ENCODE measurements at regions of chr12 and their contacts with region 1.

Region 1: GRCh38 chr12:11765817-11766794 is 116.6 kb downstream of the ETV6 start:
- DNase-seq: peak; percentile 86
- ATAC-seq: peak; percentile 78
- H3K4me3 ChIP-seq: peak overlapping the region in 3 of 5 experiments; percentile 1 to 21 (median 16)
- H3K4me3 Mint-ChIP-seq: peak overlapping the region; percentile 84
- H3K27ac ChIP-seq: peak overlapping the region; percentile 68 to 74
- H3K27ac Mint-ChIP-seq: peak overlapping the region; percentile 91
- H3K4me1 ChIP-seq: peaks cover 63 to 70% of the 10 kb centered on the region in 2 donors
- H3K4me1 Mint-ChIP-seq: peaks cover 83% of the 10 kb centered on the region
- H3K27me3 ChIP-seq: no peaks in the 10 kb centered on the region
- H3K27me3 Mint-ChIP-seq: no peaks in the 10 kb centered on the region
- CTCF ChIP-seq: no peak

Region 2: GRCh38 chr12:11730299-11731041 is 35.6 kb before region 1 on chr12:
- CTCF ChIA-PET with region 1: interaction called, 6 read pairs
- POLR2A ChIA-PET with region 1: interaction called, 9 read pairs
- intact Hi-C with region 1: loop called (anchors 1 kb)
- DNase-seq: peak; percentile 83
- ATAC-seq: peak; percentile 80
- H3K4me3 ChIP-seq: no peak overlapping the region
- H3K4me3 Mint-ChIP-seq: peak overlapping the region; percentile 79
- H3K27ac ChIP-seq: peak overlapping the region; percentile 69 to 76
- H3K27ac Mint-ChIP-seq: peak overlapping the region; percentile 94
- H3K4me1 ChIP-seq: peaks cover 82 to 94% of the 10 kb centered on the region in 2 donors
- H3K4me1 Mint-ChIP-seq: peaks cover 92% of the 10 kb centered on the region
- H3K27me3 ChIP-seq: no peaks in the 10 kb centered on the region
- H3K27me3 Mint-ChIP-seq: no peaks in the 10 kb centered on the region
- CTCF ChIP-seq: no peak

Region 3: GRCh38 chr12:11746024-11746771 is 19.9 kb before region 1 on chr12:
- CTCF ChIA-PET with region 1: interaction called, 18 read pairs
- POLR2A ChIA-PET with region 1: interaction called, 12 read pairs
- intact Hi-C with region 1: loop called (anchors 2 kb)
- DNase-seq: peak; percentile 84
- ATAC-seq: peak; percentile 67
- H3K4me3 ChIP-seq: peak overlapping the region in 2 of 5 experiments; percentile 3 to 13
- H3K4me3 Mint-ChIP-seq: peak overlapping the region; percentile 68
- H3K27ac ChIP-seq: peak overlapping the region; percentile 19 to 71
- H3K27ac Mint-ChIP-seq: peak overlapping the region; percentile 89
- H3K4me1 ChIP-seq: peaks cover 65 to 80% of the 10 kb centered on the region in 2 donors
- H3K4me1 Mint-ChIP-seq: peaks cover 83% of the 10 kb centered on the region
- H3K27me3 ChIP-seq: no peaks in the 10 kb centered on the region
- H3K27me3 Mint-ChIP-seq: no peaks in the 10 kb centered on the region
- CTCF ChIP-seq: no peak

Region 4: GRCh38 chr12:11780521-11781101 is 14.5 kb after region 1 on chr12:
- CTCF ChIA-PET with region 1: interaction called, 5 read pairs
- POLR2A ChIA-PET with region 1: no interaction called
- intact Hi-C with region 1: loop called (anchors 2 kb)
- DNase-seq: peak; percentile 67
- ATAC-seq: peak; percentile 58
- H3K4me3 ChIP-seq: no peak overlapping the region
- H3K4me3 Mint-ChIP-seq: peak overlapping the region; percentile 47
- H3K27ac ChIP-seq: no peak overlapping the region
- H3K27ac Mint-ChIP-seq: peak overlapping the region; percentile 59
- H3K4me1 ChIP-seq: peaks cover 10 to 11% of the 10 kb centered on the region in 2 donors
- H3K4me1 Mint-ChIP-seq: peaks cover 56% of the 10 kb centered on the region
- H3K27me3 ChIP-seq: no peaks in the 10 kb centered on the region
- H3K27me3 Mint-ChIP-seq: no peaks in the 10 kb centered on the region
- CTCF ChIP-seq: no peak

Region 5: GRCh38 chr12:11812586-11813427 is 46.7 kb after region 1 on chr12:
- CTCF ChIA-PET with region 1: interaction called, 6 read pairs
- POLR2A ChIA-PET with region 1: interaction called, 4 read pairs
- intact Hi-C with region 1: loop called (anchors 5 kb)
- DNase-seq: peak; percentile 70
- ATAC-seq: peak; percentile 82
- H3K4me3 ChIP-seq: peak overlapping the region; percentile 35 to 64 (median 52)
- H3K4me3 Mint-ChIP-seq: peak overlapping the region; percentile 35
- H3K27ac ChIP-seq: peak overlapping the region; percentile 54 to 80
- H3K27ac Mint-ChIP-seq: peak overlapping the region; percentile 78
- H3K4me1 ChIP-seq: peaks cover 34 to 37% of the 10 kb centered on the region in 2 donors
- H3K4me1 Mint-ChIP-seq: peaks cover 53% of the 10 kb centered on the region
- H3K27me3 ChIP-seq: no peaks in the 10 kb centered on the region
- H3K27me3 Mint-ChIP-seq: no peaks in the 10 kb centered on the region
- CTCF ChIP-seq: peak; percentile 36

Region 6: DNA sequence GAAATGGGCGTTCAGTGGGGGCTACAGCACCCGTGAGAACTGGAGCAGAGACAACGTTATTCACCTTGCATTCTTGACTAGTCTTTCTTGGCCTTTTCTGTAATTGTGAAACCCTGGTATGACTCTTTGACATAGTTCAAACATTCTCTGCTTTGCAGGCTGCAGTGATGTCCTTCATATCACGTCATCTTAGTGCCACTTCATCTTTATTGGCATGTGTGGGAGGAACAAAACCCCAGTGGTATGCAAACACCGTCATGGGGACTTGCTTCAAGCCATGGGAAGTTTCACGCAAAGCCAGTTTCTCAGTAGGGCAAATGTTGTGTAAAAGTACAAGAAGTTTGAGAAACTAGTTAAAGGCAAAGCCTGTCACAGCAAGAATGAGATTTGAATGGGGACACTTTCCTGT is 816.8 kb after region 1 on chr12:
- CTCF ChIA-PET with region 1: no interaction called
- POLR2A ChIA-PET with region 1: no interaction called
- intact Hi-C with region 1: no loop called
- DNase-seq: peak; percentile 41
- ATAC-seq: peak; percentile 39
- H3K4me3 ChIP-seq: no peak overlapping the region
- H3K4me3 Mint-ChIP-seq: no peak overlapping the region
- H3K27ac ChIP-seq: no peak overlapping the region
- H3K27ac Mint-ChIP-seq: no peak overlapping the region
- H3K4me1 ChIP-seq: peaks cover 0 to 9% of the 10 kb centered on the region in 2 donors
- H3K4me1 Mint-ChIP-seq: peaks cover 16% of the 10 kb centered on the region
- H3K27me3 ChIP-seq: no peaks in the 10 kb centered on the region
- H3K27me3 Mint-ChIP-seq: peaks cover 7% of the 10 kb centered on the region
- CTCF ChIP-seq: no peak